ENCODE measurements at regions of chr1 and their contacts with region 1.

Region 1: DNA sequence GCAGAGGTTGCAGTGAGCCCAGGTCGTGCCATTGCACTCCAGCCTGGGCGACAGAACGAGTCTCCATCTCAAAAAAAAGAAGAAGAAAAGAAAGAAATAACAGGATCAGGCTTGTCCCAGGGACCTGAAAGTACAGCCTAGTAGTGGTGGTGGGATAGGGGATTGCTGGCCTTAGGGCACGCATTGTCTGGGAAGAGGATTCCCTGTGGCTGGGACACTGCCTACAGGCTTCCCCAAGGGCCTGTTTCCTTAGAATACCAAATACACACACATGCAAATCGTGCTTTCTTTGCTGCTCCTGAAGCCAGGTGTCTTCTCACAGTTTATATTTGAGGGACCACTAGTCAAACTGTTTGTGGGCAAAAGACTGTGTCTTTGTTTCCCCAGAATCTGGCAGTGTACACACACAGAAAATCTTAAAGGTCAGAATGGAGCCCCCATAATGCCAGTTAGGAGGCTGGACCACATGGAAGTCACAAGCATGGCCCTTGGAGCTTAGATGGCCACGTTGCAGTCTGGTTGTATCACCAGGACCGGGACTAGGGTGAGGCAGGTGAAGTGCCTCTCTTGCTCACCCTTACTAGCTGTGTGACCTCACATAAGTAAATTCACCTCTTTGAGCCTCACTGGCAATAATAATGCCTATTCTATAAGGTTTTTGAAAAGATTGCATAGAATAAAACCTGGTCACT is 12.7 kb upstream of the ASAP3 start:
- DNase-seq: no peak
- H3K4me3 ChIP-seq: no peak overlapping the region
- H3K27ac ChIP-seq: no peak overlapping the region
- H3K4me1 ChIP-seq: no peaks in the 10 kb centered on the region
- H3K27me3 ChIP-seq: no peaks in the 10 kb centered on the region
- CTCF ChIP-seq: no peak

Region 2: GRCh38 chr1:22976461-22977243 is 520.0 kb before region 1 on chr1:
- CTCF ChIA-PET with region 1: no interaction called
- POLR2A ChIA-PET with region 1: no interaction called
- intact Hi-C with region 1: no loop called
- DNase-seq: peak; percentile 90
- H3K4me3 ChIP-seq: no peak overlapping the region
- H3K27ac ChIP-seq: no peak overlapping the region
- H3K4me1 ChIP-seq: peaks cover 16% of the 10 kb centered on the region
- H3K27me3 ChIP-seq: no peaks in the 10 kb centered on the region
- CTCF ChIP-seq: peak; percentile 94

Region 3: GRCh38 chr1:23050201-23050600 is 446.4 kb before region 1 on chr1:
- CTCF ChIA-PET with region 1: interaction called, 11 read pairs
- POLR2A ChIA-PET with region 1: no interaction called
- intact Hi-C with region 1: no loop called
- DNase-seq: no peak
- H3K4me3 ChIP-seq: no peak overlapping the region
- H3K27ac ChIP-seq: no peak overlapping the region
- H3K4me1 ChIP-seq: no peaks in the 10 kb centered on the region
- H3K27me3 ChIP-seq: no peaks in the 10 kb centered on the region
- CTCF ChIP-seq: no peak

Region 4: GRCh38 chr1:23079025-23079424 is 417.6 kb before region 1 on chr1:
- CTCF ChIA-PET with region 1: no interaction called
- POLR2A ChIA-PET with region 1: no interaction called
- intact Hi-C with region 1: no loop called
- DNase-seq: no peak
- H3K4me3 ChIP-seq: no peak overlapping the region
- H3K27ac ChIP-seq: no peak overlapping the region
- H3K4me1 ChIP-seq: no peaks in the 10 kb centered on the region
- H3K27me3 ChIP-seq: no peaks in the 10 kb centered on the region
- CTCF ChIP-seq: no peak

Region 5: GRCh38 chr1:23273450-23274133 is 223.0 kb before region 1 on chr1:
- CTCF ChIA-PET with region 1: no interaction called
- POLR2A ChIA-PET with region 1: no interaction called
- intact Hi-C with region 1: no loop called
- DNase-seq: peak; percentile 48
- H3K4me3 ChIP-seq: no peak overlapping the region
- H3K27ac ChIP-seq: no peak overlapping the region
- H3K4me1 ChIP-seq: no peaks in the 10 kb centered on the region
- H3K27me3 ChIP-seq: no peaks in the 10 kb centered on the region
- CTCF ChIP-seq: no peak

Region 6: DNA sequence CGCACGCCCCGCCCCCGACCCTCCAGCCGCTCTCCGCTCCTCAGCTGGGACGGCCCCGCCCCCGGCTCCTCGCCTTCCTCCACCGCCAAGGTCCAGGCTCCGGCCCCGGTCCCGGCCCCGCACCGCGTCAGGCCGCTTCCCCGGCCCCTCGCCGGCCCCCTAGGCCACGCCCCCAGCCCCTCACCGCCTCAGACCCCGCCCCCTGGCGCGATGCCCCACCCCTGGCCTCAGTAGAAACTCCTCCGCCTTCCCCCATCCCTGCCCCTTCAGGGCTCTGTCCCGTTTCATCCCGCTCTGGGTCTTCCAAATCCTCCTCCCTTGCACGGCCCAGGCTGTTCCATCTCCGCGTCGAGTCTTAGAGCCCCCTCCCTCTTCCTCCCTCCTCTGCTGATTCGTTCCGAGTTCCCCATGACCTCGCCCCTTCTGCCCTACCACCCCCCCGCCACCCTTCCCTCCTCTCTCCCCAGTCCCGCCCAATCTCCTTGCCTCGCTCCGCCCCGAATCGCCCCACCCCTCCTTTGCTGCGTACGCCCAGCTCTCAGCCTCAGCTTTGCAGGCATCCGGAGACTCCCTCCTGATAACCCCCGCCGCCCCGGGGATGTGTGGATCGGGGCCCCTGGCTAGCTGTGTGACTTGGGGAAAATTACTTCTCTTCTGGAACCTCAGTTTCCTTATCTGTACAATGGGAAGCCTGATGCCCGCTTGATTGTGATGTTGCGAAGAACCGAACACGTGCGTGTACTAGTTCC is 12.2 kb before region 1 on chr1:
- CTCF ChIA-PET with region 1: interaction called, 16 read pairs
- POLR2A ChIA-PET with region 1: no interaction called
- intact Hi-C with region 1: no loop called
- DNase-seq: peak; percentile 94
- H3K4me3 ChIP-seq: peak overlapping the region; percentile 68
- H3K27ac ChIP-seq: peak overlapping the region; percentile 65
- H3K4me1 ChIP-seq: peaks cover 6% of the 10 kb centered on the region
- H3K27me3 ChIP-seq: no peaks in the 10 kb centered on the region
- CTCF ChIP-seq: no peak

Region 7: GRCh38 chr1:23528250-23528978 is 31.8 kb after region 1 on chr1:
- CTCF ChIA-PET with region 1: interaction called, 12 read pairs
- POLR2A ChIA-PET with region 1: no interaction called
- intact Hi-C with region 1: no loop called
- DNase-seq: peak; percentile 87
- H3K4me3 ChIP-seq: peak overlapping the region; percentile 84
- H3K27ac ChIP-seq: peak overlapping the region; percentile 93
- H3K4me1 ChIP-seq: peaks cover 50% of the 10 kb centered on the region
- H3K27me3 ChIP-seq: no peaks in the 10 kb centered on the region
- CTCF ChIP-seq: no peak

Region 8: DNA sequence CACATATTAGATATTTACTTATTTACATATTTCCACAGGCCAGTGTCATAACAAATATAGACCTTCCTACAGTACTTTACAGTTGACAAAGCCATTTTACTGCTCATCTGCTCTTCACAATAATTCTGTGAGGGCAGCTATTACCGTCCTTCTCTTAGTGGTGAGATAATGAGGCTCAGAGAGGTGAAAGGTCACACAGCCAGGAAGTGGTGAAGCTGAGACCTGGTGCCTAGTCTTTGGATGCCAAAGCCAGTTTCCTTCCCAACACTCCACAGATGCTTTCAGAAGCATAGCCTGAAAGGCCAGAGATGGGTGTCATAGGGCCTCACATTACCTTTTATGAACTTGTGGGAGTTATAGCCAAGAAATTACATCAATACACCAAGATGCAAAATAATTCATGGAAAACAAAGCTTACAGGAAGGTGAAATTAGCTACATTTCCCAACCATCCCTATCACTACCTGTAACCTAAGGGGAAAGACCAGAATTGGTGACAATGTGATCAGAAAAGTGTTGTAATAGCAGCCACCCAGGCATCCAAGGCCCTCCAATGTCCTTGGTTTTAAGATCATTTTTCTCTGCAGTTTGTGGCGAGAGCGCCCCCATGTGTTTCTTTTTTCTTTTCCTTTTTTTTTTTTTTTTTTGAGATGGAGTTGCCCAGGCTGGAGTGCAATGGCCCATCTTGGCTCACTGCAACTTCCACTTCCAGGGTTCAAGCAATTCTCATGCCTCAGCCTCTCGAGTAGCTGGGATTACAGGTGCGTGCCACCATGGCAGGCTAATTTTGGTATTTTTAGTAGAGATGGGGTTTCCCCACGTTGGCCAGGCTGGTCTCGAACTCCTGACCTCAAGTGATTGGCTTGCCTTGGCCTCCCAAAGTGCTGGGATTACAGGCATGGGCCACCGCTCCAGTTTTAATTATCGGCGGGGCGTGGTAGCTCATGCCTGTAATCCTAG is 168.5 kb after region 1 on chr1:
- CTCF ChIA-PET with region 1: interaction called, 3 read pairs
- POLR2A ChIA-PET with region 1: no interaction called
- intact Hi-C with region 1: loop called (anchors 5 kb)
- DNase-seq: peak; percentile 69
- H3K4me3 ChIP-seq: no peak overlapping the region
- H3K27ac ChIP-seq: no peak overlapping the region
- H3K4me1 ChIP-seq: no peaks in the 10 kb centered on the region
- H3K27me3 ChIP-seq: no peaks in the 10 kb centered on the region
- CTCF ChIP-seq: peak; percentile 62